HepG2 (cell line): ENCODE measurements at regions of chr13 and their contacts with region 1.

Region 1: GRCh38 chr13:113169277-113170272 is 11.1 kb downstream of the PROZ start:
- DNase-seq: peak; percentile 83
- ATAC-seq: peak; percentile 91
- H3K4me3 ChIP-seq: peak overlapping the region in 2 of 3 experiments; percentile 28 to 45; a peak in 2 of 6 replicates
- H3K27ac ChIP-seq: peak overlapping the region; percentile 73
- H3K4me1 ChIP-seq: peaks cover 39% of the 10 kb centered on the region
- H3K27me3 ChIP-seq: no peaks in the 10 kb centered on the region
- CTCF ChIP-seq: no peak
- EP300 ChIP-seq: peak in 1 of 2 experiments; percentile 81; a peak in 1 of 4 replicates
- POLR2A ChIP-seq: peak; percentile 33 to 41; a peak in 2 of 4 replicates
- RAD21 ChIP-seq: no peak

Region 2: GRCh38 chr13:112510002-112510780 is 659.4 kb before region 1 on chr13:
- CTCF ChIA-PET with region 1: no interaction called
- POLR2A ChIA-PET with region 1: no interaction called
- in situ Hi-C with region 1: no loop called
- intact Hi-C with region 1: no loop called
- DNase-seq: peak; percentile 52
- ATAC-seq: peak; percentile 93
- H3K4me3 ChIP-seq: no peak overlapping the region
- H3K27ac ChIP-seq: no peak overlapping the region
- H3K4me1 ChIP-seq: no peaks in the 10 kb centered on the region
- H3K27me3 ChIP-seq: no peaks in the 10 kb centered on the region
- CTCF ChIP-seq: peak; percentile 56
- EP300 ChIP-seq: no peak
- POLR2A ChIP-seq: no peak
- RAD21 ChIP-seq: no peak

Region 3: GRCh38 chr13:113187263-113187669 is 17.7 kb after region 1 on chr13:
- CTCF ChIA-PET with region 1: no interaction called
- POLR2A ChIA-PET with region 1: interaction called, 10 read pairs
- in situ Hi-C with region 1: no loop called
- intact Hi-C with region 1: no loop called
- DNase-seq: peak; percentile 83
- ATAC-seq: no peak
- H3K4me3 ChIP-seq: no peak overlapping the region
- H3K27ac ChIP-seq: peak overlapping the region; percentile 51
- H3K4me1 ChIP-seq: peaks cover 30% of the 10 kb centered on the region
- H3K27me3 ChIP-seq: no peaks in the 10 kb centered on the region
- CTCF ChIP-seq: no peak
- EP300 ChIP-seq: no peak; a peak in 1 of 4 replicates
- POLR2A ChIP-seq: no peak
- RAD21 ChIP-seq: no peak

Region 4: GRCh38 chr13:113208424-113209335 is 39.1 kb after region 1 on chr13 and contains the start of gene PCID2:
- CTCF ChIA-PET with region 1: no interaction called
- POLR2A ChIA-PET with region 1: interaction called, 13 read pairs
- in situ Hi-C with region 1: no loop called
- intact Hi-C with region 1: no loop called
- DNase-seq: peak; percentile 82
- ATAC-seq: peak; percentile 86
- H3K4me3 ChIP-seq: peak within 1 kb of the TSS; percentile 83 to 96 (median 85)
- H3K27ac ChIP-seq: peak within 1 kb of the TSS; percentile 92
- H3K4me1 ChIP-seq: peaks cover 71% of the 10 kb centered on the region
- H3K27me3 ChIP-seq: no peaks in the 10 kb centered on the region
- CTCF ChIP-seq: peak; percentile 52
- EP300 ChIP-seq: peak; percentile 29 to 59; a peak in 1 of 4 replicates
- POLR2A ChIP-seq: peak in 1 of 2 experiments; percentile 83; a peak in 2 of 4 replicates
- RAD21 ChIP-seq: peak; percentile 54; the same call in 1 of the 2 replicates
- total RNA-seq, gene PCID2: 65.0 and 76.4 TPM in 2 replicates